ENCODE measurements at regions of chr7 and their contacts with region 1.

Region 1: DNA sequence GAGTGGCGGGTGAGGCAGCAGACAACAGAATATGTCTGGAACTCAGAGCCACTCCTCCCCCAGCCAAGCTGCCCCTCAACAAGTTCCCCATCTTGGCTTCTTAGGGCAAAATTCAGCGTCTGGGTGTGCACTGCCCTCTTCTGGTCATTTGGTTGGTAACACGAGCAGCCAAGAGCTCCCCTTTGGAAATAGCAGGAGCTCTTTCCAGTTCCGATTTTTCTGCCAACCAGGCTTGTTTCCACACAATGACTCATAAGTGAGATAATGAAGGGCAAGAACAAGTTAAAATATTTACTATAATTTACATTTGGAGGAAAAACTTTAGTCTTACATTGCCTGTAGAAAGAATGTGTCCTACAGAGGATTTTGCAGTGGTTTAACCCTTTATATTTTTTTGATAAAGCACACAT is 70.5 kb downstream of the ADCYAP1R1 start:
- DNase-seq: peak; percentile 64
- H3K4me3 Mint-ChIP-seq: no peak overlapping the region
- H3K27ac Mint-ChIP-seq: no peak overlapping the region
- H3K4me1 Mint-ChIP-seq: no peaks in the 10 kb centered on the region
- H3K27me3 Mint-ChIP-seq: peaks cover 2% of the 10 kb centered on the region

Region 2: GRCh38 chr7:30800785-30801252 is 321.8 kb before region 1 on chr7:
- CTCF ChIA-PET with region 1: interaction called, 5 read pairs
- intact Hi-C with region 1: loop called (anchors 1 kb)
- DNase-seq: peak; percentile 56
- H3K4me3 Mint-ChIP-seq: no peak overlapping the region
- H3K27ac Mint-ChIP-seq: no peak overlapping the region
- H3K4me1 Mint-ChIP-seq: peaks cover 13% of the 10 kb centered on the region
- H3K27me3 Mint-ChIP-seq: no peaks in the 10 kb centered on the region

Region 3: GRCh38 chr7:30974605-30975255 is 147.9 kb before region 1 on chr7:
- CTCF ChIA-PET with region 1: interaction called, 268 read pairs
- intact Hi-C with region 1: no loop called
- DNase-seq: peak; percentile 84
- H3K4me3 Mint-ChIP-seq: no peak overlapping the region
- H3K27ac Mint-ChIP-seq: no peak overlapping the region
- H3K4me1 Mint-ChIP-seq: no peaks in the 10 kb centered on the region
- H3K27me3 Mint-ChIP-seq: peaks cover 27% of the 10 kb centered on the region

Region 4: GRCh38 chr7:30983042-30983913 is 139.4 kb before region 1 on chr7:
- CTCF ChIA-PET with region 1: interaction called, 268 read pairs
- intact Hi-C with region 1: loop called (anchors 1 kb)
- DNase-seq: peak; percentile 85
- H3K4me3 Mint-ChIP-seq: no peak overlapping the region
- H3K27ac Mint-ChIP-seq: no peak overlapping the region
- H3K4me1 Mint-ChIP-seq: peaks cover 4% of the 10 kb centered on the region
- H3K27me3 Mint-ChIP-seq: peaks cover 45% of the 10 kb centered on the region

Region 5: DNA sequence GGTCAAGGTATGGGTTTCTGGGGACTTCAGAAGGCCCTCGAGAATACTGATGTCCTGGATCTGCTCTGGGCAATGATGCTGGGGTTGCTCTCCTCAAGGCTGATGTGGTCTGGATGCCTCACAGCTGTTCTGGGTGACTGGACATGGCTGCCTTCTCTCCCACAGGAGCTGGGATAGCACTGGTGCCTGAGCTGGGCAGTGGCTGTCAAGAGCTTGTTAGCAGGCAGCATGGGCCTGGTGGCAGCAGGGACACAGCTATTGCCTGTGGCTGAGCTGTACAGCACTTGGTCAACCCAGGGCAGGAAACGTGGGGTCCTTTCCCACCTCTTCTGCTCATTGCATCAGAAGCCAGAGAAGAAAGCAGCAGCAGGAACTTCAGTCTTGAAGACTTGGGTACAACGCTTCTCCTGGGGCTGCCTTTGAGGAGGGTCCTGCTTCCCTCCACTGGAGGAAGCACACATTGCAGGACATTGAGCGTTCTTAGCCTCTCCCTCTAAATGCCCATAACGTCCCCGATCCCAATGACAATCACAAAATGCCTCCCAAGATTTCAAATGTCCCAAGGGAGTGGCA is 57.5 kb before region 1 on chr7:
- CTCF ChIA-PET with region 1: interaction called, 4 read pairs
- intact Hi-C with region 1: loop called (anchors 5 kb)
- DNase-seq: no peak
- H3K4me3 Mint-ChIP-seq: no peak overlapping the region
- H3K27ac Mint-ChIP-seq: no peak overlapping the region
- H3K4me1 Mint-ChIP-seq: no peaks in the 10 kb centered on the region
- H3K27me3 Mint-ChIP-seq: no peaks in the 10 kb centered on the region

Measured in activated naive CD4-positive, alpha-beta T cell treated with anti-CD3 and anti-CD28 coated beads for 36 hours (primary cell).